Activated naive CD4-positive, alpha-beta T cell treated with anti-CD3 and anti-CD28 coated beads for 36 hours (primary cell): ENCODE measurements at regions of chr1 and their contacts with region 1.

Region 1: DNA sequence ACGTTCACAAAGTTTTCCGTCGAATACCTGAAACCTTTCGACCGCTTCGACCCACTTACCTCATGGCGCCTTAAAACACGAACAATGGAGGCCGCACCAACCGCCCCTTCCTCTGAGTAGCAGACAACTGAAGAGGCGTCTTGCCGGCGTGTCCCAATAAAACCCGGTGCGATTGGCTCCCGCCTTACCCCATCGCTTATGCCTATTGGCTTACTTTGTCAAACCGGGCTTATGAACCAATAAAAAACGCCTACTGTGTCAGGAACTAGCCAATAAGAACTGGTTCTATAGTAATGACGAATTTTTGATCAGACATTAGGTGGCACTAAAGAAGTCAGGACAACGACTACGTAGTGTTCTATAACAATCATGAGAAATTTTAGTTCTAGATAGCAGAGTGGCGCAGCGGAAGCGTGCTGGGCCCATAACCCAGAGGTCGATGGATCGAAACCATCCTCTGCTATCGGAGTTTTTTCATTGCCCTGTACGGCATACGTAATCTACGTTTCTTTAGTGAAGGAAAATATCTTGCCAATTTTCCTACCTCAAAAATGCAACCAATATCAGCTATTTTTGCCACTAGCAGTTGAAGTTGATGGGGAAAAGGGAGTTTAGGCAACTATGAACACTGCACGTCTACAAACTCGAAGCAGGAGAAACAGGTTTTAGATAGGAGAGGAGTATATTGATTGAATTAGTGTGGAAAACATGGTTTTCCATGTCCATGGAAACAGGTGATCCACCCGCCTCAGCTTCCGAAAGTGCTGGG is at the start of gene ILF2:
- DNase-seq: peak; percentile 99
- H3K4me3 Mint-ChIP-seq: no peak within 1 kb of the TSS
- H3K27ac Mint-ChIP-seq: no peak within 1 kb of the TSS
- H3K4me1 Mint-ChIP-seq: peaks cover 36% of the 10 kb centered on the region
- H3K27me3 Mint-ChIP-seq: no peaks in the 10 kb centered on the region
- total RNA-seq, gene ILF2: 346 to 357 TPM

Region 2: DNA sequence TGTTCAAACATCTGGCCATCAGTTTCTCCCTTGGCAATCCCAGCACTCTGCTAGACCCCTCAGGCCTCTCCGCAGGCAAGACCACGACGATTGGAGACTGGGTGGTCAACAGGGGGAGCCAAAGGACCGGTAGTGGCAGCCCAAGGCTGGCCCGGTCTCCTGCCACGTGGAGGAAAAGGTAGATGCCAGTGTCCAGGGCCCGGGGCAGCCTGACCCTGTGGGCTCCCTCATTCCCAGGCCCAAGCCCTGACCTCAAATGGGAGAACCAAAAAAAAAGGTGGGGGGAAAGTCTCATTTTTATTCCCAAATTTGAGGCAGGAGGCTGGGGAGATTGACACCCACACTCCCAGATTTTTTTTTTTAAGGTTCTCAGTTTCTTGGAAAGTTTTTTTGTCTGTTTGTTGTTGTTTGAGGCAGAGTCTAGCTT is 160.0 kb before region 1 on chr1:
- CTCF ChIA-PET with region 1: interaction called, 4 read pairs
- intact Hi-C with region 1: loop called (anchors 2 kb)
- DNase-seq: peak; percentile 90
- H3K4me3 Mint-ChIP-seq: no peak overlapping the region
- H3K27ac Mint-ChIP-seq: peak overlapping the region; percentile 36
- H3K4me1 Mint-ChIP-seq: peaks cover 8% of the 10 kb centered on the region
- H3K27me3 Mint-ChIP-seq: no peaks in the 10 kb centered on the region

Region 3: DNA sequence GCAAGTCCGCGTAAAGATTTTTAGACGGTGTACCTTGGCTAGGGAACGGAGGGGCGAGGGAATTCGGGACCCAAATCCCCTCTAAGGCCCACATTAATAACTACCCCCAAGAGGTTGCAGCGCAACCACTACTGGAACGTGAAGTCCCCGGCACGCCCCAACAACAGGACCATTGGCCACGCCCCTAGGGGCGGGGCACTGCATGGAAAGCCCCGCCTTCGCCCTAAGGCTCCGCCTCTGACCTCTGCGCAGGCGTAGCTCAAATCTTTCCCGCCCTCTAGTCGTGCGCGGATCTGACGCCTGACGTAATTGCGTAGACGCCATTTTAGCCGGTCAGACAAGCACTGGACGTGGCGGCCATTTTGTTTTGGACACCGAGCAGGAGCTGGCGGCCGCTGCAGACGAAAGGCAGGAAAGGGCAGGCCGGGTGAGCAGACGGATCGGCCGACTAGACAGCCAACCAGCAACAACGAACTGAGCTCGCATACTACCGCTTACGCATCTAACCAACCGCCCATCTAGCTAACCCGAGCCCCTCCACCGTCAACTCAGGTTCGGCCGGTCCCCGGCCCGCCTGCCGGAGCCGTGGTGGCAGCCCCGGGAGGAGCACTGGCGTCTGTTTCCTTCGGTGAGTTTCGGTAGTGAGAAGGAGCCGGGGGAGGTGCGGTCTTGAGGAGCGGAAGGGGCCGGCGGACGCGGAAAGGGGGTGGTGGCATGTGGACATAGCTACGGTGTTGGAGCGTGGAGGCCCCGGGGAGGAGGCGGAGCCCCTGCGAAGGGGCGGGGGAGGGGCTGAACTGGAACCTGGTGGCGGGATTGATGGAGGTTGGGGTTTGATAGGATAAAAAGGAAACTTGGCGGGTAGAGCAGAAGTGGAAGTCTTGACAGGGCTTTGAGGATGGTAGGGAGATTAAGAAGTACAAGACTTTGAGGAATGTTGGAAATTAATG is 37.1 kb before region 1 on chr1 and contains the start of gene CHTOP:
- CTCF ChIA-PET with region 1: no interaction called
- intact Hi-C with region 1: loop called (anchors 1 kb)
- DNase-seq: peak; percentile 98
- H3K4me3 Mint-ChIP-seq: peak within 1 kb of the TSS; percentile 90
- H3K27ac Mint-ChIP-seq: peak within 1 kb of the TSS; percentile 100
- H3K4me1 Mint-ChIP-seq: peaks cover 45% of the 10 kb centered on the region
- H3K27me3 Mint-ChIP-seq: no peaks in the 10 kb centered on the region
- total RNA-seq, gene CHTOP: 88.2 to 91.3 TPM

Region 4: DNA sequence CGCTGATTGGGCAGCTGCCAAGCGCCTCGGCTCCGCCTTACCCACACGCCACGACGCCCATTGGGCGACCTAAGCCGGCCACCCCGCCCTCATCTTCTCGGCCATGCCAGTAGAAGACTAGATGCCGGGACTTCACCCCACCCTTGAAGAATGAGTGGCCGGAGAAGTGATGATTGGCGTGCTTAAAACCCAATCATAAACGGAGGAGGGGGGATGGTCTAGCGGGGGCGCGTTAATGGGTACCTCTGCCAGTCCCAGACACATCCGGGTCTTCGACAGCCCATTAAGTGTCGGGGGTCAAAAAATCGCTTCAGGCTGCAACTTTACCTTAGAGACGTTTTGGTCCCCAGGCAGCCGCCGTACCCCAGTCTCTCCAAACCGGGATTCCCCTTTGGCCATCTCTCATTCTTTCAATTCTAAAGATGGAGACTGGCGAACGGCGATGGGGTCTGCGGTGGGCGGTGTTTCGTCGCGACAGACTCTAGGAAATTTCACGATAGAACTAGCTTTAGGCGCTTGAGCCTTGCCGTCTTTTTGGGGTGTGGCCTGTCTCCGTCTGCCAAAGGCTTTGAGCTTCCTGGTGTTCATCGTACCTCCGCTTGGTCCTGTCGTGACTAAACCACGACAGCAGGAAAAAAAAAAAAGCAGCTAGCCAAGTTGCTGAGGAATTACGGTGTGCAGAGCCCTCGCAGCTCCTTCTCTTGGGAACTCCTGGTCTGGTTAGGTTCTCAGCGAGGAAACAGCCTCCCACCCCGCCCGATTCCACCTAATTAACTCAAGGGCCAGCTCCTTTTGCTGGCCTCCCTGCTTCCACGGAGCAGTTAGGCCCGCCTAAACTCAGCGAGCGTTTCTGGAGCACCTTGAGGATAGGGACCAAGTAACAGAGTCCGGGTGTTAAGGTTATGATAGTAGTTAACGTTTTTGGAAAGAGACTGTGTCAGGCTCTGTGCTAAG is 252.2 kb after region 1 on chr1 and contains the start of gene GATAD2B:
- CTCF ChIA-PET with region 1: no interaction called
- intact Hi-C with region 1: loop called (anchors 1 kb)
- DNase-seq: peak; percentile 100
- H3K4me3 Mint-ChIP-seq: peak within 1 kb of the TSS; percentile 81
- H3K27ac Mint-ChIP-seq: peak within 1 kb of the TSS; percentile 94
- H3K4me1 Mint-ChIP-seq: peaks cover 36% of the 10 kb centered on the region
- H3K27me3 Mint-ChIP-seq: no peaks in the 10 kb centered on the region
- total RNA-seq, gene GATAD2B: 69.0 to 70.2 TPM

Region 5: GRCh38 chr1:153977250-153978240 is 306.5 kb after region 1 on chr1 and contains the start of gene JTB:
- CTCF ChIA-PET with region 1: interaction called, 3 read pairs
- intact Hi-C with region 1: loop called (anchors 1 kb)
- DNase-seq: peak; percentile 94
- H3K4me3 Mint-ChIP-seq: peak within 1 kb of the TSS; percentile 97
- H3K27ac Mint-ChIP-seq: peak within 1 kb of the TSS; percentile 95
- H3K4me1 Mint-ChIP-seq: peaks cover 37% of the 10 kb centered on the region
- H3K27me3 Mint-ChIP-seq: no peaks in the 10 kb centered on the region
- total RNA-seq, gene JTB: 126 to 131 TPM

Region 6: GRCh38 chr1:154220071-154220969 is 549.3 kb after region 1 on chr1 and contains the start of gene UBAP2L:
- CTCF ChIA-PET with region 1: no interaction called
- intact Hi-C with region 1: loop called (anchors 1 kb)
- DNase-seq: peak; percentile 99
- H3K4me3 Mint-ChIP-seq: peak within 1 kb of the TSS; percentile 96
- H3K27ac Mint-ChIP-seq: peak within 1 kb of the TSS; percentile 98
- H3K4me1 Mint-ChIP-seq: peaks cover 72% of the 10 kb centered on the region
- H3K27me3 Mint-ChIP-seq: no peaks in the 10 kb centered on the region
- total RNA-seq, gene UBAP2L: 154 to 164 TPM